GM12878 (cell line): ENCODE measurements at regions of chr5 and their contacts with region 1.

Region 1: DNA sequence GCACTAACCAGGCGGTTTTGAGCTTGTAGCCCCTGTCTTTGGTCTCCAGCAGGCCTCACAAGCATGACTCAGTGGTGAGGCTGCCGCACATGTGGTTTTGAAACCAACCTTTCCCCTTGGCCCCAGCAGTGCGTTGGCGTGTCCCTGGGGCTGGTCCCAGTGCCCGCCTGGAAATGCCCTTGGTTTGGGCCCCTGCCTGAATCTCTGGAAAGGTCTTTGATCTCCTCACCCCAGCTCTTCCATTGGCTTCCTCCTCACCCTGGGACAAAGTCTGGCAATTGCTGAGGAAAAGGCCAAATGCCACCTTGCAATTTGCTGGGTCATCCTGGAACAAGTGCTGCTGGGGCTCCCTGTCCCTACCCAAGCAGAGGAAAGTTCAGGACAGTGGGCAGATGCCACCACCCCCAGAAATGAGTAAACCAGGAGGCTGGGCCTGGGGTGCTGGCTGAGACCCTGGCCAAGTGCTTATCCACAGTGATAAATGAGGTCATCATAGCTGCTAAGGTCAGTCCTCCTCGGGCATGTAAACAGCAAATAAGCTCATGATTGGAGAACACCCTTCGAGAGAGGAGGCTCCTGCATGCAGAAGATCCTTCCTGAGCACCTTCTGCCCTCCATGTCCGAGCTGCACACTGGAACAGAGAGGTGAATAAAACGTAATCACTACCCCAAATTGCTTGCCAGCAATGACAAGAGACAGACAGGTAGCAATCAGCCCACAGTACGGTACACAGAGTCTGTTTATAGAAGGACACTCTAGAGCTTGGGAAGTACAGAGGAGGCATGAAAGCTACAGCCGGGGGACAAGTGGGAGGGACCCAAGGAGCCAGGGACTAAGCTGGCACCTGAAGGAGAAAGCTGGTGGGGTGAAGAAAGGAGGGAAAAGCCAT is 98.9 kb upstream of the CPEB4 start:
- DNase-seq: no peak
- ATAC-seq: peak; percentile 23; the same call in 2 of the 3 replicates
- H3K4me3 ChIP-seq: no peak overlapping the region
- H3K27ac ChIP-seq: no peak overlapping the region
- H3K4me1 ChIP-seq: peaks cover 50% of the 10 kb centered on the region
- H3K27me3 ChIP-seq: no peaks in the 10 kb centered on the region
- CTCF ChIP-seq: no peak
- EP300 ChIP-seq: no peak
- POLR2A ChIP-seq: no peak
- RAD21 ChIP-seq: no peak

Region 2: DNA sequence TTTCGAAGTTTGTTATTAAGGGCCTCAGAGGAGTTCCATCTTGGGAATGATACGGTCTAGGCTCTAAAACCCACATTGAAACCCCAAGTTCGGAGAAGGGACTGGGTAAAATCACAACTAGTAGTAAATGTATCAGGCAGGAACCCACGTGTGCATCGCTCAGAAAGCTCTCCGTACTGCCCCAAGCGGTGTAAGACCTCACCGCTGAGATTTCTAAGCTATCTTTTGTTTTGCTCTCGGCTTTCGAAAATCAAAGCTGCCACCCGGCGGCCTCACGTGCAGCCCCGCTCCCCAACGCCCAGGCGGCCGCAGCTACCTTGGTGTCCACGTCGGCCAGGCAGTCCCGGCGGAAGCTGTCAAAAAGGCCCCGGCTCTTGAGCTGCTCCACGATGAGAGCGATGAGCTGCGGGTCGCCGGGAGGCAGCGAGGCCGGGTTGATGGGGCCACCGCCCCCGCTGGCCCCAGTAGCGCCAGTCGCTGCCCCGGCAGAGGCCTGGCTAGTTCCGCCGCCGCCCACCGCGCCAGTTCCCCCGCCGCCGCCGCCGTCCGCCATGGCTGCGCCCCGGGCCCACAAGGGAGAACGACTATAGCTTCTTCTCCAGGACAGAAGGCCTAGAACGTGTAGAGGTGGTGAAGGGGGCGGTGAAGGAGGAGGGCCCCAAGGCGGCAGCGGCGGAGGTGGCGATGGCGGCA is 173.2 kb before region 1 on chr5:
- CTCF ChIA-PET with region 1: interaction called, 9 read pairs
- POLR2A ChIA-PET with region 1: interaction called, 3 read pairs
- RAD21 ChIA-PET with region 1: interaction called, 7 read pairs
- SMC1A ChIA-PET with region 1: interaction called, 4 read pairs
- in situ Hi-C with region 1: no loop called
- intact Hi-C with region 1: loop called (anchors 5 kb)
- DNase-seq: peak; percentile 43
- ATAC-seq: peak; percentile 86
- H3K4me3 ChIP-seq: peak overlapping the region; percentile 66
- H3K27ac ChIP-seq: peak overlapping the region; percentile 72
- H3K4me1 ChIP-seq: peaks cover 14% of the 10 kb centered on the region
- H3K27me3 ChIP-seq: no peaks in the 10 kb centered on the region
- CTCF ChIP-seq: peak; percentile 70 to 82 (median 77)
- EP300 ChIP-seq: no peak
- POLR2A ChIP-seq: peak; percentile 73
- RAD21 ChIP-seq: peak; percentile 29; the same call in 1 of the 2 replicates

Region 3: DNA sequence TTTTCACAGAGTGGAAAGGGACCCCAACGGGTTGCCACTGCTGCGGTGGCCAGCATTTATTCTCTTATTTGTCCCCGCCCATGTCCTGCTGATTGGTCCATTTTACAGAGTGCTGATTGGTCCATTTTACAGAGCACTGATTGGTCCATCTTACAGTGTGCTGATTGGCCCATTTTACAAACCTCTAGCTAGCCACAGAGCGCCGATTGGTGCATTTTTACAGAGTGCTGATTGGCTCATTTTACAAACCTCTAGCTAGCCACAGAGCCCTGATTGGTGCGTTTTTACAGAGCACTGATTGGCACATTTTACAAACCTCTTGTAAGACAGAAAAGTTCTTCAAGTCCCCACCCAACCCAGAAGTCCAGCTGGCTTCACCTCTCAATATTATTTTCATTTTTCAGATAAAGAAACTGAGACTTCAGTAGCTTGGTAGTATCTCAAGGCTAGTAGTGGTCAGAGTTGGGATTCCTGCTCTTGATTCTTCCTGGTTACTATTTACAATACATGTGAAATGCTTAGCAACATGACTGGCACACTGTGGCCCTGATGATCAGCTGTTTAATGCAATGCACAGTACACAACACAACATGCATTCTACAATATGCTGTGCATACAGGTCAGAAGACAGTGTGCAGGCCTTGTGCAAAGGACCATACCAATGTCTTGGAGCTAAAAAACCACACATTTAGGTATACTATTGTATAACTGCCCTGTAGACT is 109.2 kb before region 1 on chr5:
- CTCF ChIA-PET with region 1: interaction called, 9 read pairs
- POLR2A ChIA-PET with region 1: no interaction called
- RAD21 ChIA-PET with region 1: interaction called, 18 read pairs
- SMC1A ChIA-PET with region 1: interaction called, 12 read pairs
- in situ Hi-C with region 1: no loop called
- intact Hi-C with region 1: loop called (anchors 10 kb)
- DNase-seq: peak; percentile 47
- ATAC-seq: peak; percentile 84
- H3K4me3 ChIP-seq: no peak overlapping the region
- H3K27ac ChIP-seq: peak overlapping the region; percentile 72
- H3K4me1 ChIP-seq: peaks cover 22% of the 10 kb centered on the region
- H3K27me3 ChIP-seq: no peaks in the 10 kb centered on the region
- CTCF ChIP-seq: no peak
- EP300 ChIP-seq: no peak
- POLR2A ChIP-seq: no peak
- RAD21 ChIP-seq: no peak

Region 4: GRCh38 chr5:173753307-173754168 is 35.7 kb before region 1 on chr5:
- CTCF ChIA-PET with region 1: interaction called, 4 read pairs
- POLR2A ChIA-PET with region 1: interaction called, 3 read pairs
- RAD21 ChIA-PET with region 1: interaction called, 3 read pairs
- SMC1A ChIA-PET with region 1: interaction called, 12 read pairs
- in situ Hi-C with region 1: no loop called
- intact Hi-C with region 1: no loop called
- DNase-seq: no peak
- ATAC-seq: no peak
- H3K4me3 ChIP-seq: no peak overlapping the region
- H3K27ac ChIP-seq: no peak overlapping the region
- H3K4me1 ChIP-seq: peaks cover 15% of the 10 kb centered on the region
- H3K27me3 ChIP-seq: no peaks in the 10 kb centered on the region
- CTCF ChIP-seq: no peak
- EP300 ChIP-seq: no peak
- POLR2A ChIP-seq: no peak
- RAD21 ChIP-seq: no peak

Region 5: DNA sequence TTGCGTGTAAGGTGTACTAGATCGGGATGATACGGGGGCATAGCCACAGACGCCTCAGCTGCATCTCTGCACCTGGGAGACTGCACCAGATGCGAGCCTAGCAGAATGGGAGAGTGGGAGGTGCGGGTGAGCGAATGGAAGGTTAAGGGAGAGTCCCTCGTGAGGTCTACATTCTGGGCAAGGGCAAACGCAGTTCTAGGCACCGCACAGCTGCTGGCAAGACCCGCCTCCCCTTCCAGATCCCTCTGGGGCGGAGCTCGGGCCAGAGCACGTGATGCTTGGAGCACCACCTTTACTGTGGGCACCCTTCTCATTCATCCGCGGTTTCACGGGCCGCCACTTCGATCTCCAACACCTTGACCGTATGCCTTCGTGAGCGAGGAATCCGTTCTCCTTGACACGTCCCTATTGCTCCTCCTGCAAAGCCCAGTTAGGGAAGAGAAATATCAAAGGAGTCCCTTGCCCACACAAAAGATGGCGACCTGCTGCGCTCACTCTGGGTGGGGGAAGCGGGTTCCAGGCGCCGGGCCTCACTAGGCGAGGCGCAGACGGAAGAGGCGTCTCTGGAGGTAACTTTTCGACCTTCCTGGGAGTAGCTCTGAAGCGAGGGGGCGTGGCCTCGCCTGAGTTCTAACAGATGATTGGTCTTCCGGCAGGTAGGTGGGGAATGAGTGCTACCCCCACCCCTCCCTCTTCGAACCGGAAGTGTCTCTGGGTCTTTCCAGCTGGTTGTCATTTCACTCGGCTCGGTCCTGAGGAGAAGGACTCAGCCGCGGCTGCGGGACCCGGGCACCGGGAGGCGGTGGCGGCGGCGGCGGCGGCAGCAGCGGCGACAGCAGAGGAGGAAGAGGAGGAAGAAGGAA is 98.6 kb after region 1 on chr5 and contains the start of gene CPEB4:
- CTCF ChIA-PET with region 1: interaction called, 86 read pairs
- POLR2A ChIA-PET with region 1: interaction called, 8 read pairs
- RAD21 ChIA-PET with region 1: interaction called, 21 read pairs
- SMC1A ChIA-PET with region 1: interaction called, 56 read pairs
- in situ Hi-C with region 1: no loop called
- intact Hi-C with region 1: no loop called
- DNase-seq: peak; percentile 99
- ATAC-seq: peak; percentile 90
- H3K4me3 ChIP-seq: peak within 1 kb of the TSS; percentile 94
- H3K27ac ChIP-seq: peak within 1 kb of the TSS; percentile 100
- H3K4me1 ChIP-seq: peaks cover 30% of the 10 kb centered on the region
- H3K27me3 ChIP-seq: no peaks in the 10 kb centered on the region
- CTCF ChIP-seq: no peak
- EP300 ChIP-seq: peak in 1 of 2 experiments; percentile 41; a peak in 1 of 4 replicates
- POLR2A ChIP-seq: peak; percentile 92
- RAD21 ChIP-seq: 0 out of 2 replicates have a peak, but pooled peaks have one; percentile 10
- polyA plus RNA-seq, gene CPEB4: 6.9 to 20.3 TPM

Region 6: DNA sequence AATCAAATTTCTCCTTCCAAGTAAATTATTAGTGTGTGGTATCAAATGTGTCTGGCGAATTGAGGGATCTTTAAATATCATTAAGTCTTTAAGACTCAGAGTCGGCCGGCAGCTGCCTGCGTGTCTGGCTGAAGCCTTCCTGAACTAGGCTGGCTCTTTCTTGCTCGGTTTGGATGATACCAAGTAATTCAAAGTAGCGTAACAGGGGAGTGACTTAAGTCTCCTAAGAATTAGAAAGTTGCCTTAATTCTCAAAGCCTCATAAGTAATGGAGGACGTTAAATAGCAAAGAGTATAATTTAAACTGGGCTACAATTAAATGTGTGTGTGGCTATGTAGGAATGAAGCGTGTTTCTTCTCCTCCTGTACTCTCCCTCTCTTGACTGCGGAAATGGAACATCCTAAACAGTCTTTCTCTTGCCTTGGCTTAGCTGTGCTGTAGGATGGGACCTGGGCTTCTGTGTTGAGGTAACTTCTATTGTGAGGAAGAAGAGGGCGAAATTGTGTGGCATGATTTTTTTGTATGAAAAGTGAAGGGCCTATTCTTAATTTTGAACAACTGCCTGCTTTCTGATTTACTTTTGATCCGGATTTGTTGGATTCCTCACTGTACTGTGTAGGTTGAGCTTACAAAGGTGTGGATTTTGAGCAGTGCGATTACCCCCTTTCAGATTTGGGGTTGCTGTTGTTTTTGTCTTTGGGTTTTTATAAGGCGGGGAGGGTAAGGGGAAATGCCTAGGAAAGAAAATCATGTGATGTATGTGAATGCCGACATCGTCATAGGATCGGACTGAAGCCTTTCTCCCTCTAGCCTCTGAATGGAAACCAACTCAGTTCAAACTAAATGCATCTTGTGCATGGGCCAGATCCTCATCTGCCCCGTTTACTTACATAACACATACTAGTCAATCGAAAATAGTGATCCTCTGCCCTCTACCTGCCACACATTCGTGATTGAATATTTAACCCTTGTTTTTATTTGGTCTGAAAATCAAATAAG is 128.8 kb after region 1 on chr5:
- CTCF ChIA-PET with region 1: interaction called, 53 read pairs
- POLR2A ChIA-PET with region 1: interaction called, 4 read pairs
- RAD21 ChIA-PET with region 1: interaction called, 51 read pairs
- SMC1A ChIA-PET with region 1: interaction called, 90 read pairs
- in situ Hi-C with region 1: no loop called
- intact Hi-C with region 1: loop called (anchors 5 kb)
- DNase-seq: peak; percentile 86
- ATAC-seq: peak; percentile 93
- H3K4me3 ChIP-seq: peak overlapping the region; percentile 77
- H3K27ac ChIP-seq: peak overlapping the region; percentile 76
- H3K4me1 ChIP-seq: peaks cover 18% of the 10 kb centered on the region
- H3K27me3 ChIP-seq: no peaks in the 10 kb centered on the region
- CTCF ChIP-seq: peak in 2 of 3 experiments; percentile 9 to 42; a peak in 2 of 6 replicates
- EP300 ChIP-seq: no peak
- POLR2A ChIP-seq: peak; percentile 85
- RAD21 ChIP-seq: peak; percentile 47